Right ventricle myocardium inferior (tissue), 1 donor: ENCODE measurements at regions of chr7 and their contacts with region 1.

Region 1: GRCh38 chr7:39623018-39623731 is at the start of gene RALA:
- DNase-seq: peak; percentile 94
- ATAC-seq: peak; percentile 99
- total RNA-seq, gene RALA: 35.7 TPM

Region 2: GRCh38 chr7:39683216-39683845 is 60.2 kb after region 1 on chr7:
- intact Hi-C with region 1: loop called (anchors 5 kb)
- DNase-seq: no peak
- ATAC-seq: peak; percentile 14

Region 3: GRCh38 chr7:39732837-39733804 is 109.9 kb after region 1 on chr7:
- intact Hi-C with region 1: loop called (anchors 2 kb)
- DNase-seq: peak; percentile 98
- ATAC-seq: peak; percentile 97

Region 4: GRCh38 chr7:39880556-39880955 is 257.4 kb after region 1 on chr7:
- intact Hi-C with region 1: no loop called
- DNase-seq: no peak
- ATAC-seq: no peak